Naive thymus-derived CD4-positive, alpha-beta T cell (primary cell): ENCODE measurements at regions of chr4 and their contacts with region 1.

Region 1: GRCh38 chr4:122309988-122310626 is 68.7 kb upstream of the ADAD1 start:
- DNase-seq: peak in 3 of 9 donors; percentile 2 to 8 (median 7)
- ATAC-seq: no peak
- H3K4me3 ChIP-seq: no peak overlapping the region
- H3K4me3 Mint-ChIP-seq: no peak overlapping the region
- H3K27ac ChIP-seq: no peak overlapping the region
- H3K27ac Mint-ChIP-seq: no peak overlapping the region
- H3K4me1 ChIP-seq: no peaks in the 10 kb centered on the region
- H3K4me1 Mint-ChIP-seq: peaks cover 0 to 4% (median 0%) of the 10 kb centered on the region in 7 donors
- H3K27me3 ChIP-seq: no peaks in the 10 kb centered on the region
- H3K27me3 Mint-ChIP-seq: no peaks in the 10 kb centered on the region

Region 2: DNA sequence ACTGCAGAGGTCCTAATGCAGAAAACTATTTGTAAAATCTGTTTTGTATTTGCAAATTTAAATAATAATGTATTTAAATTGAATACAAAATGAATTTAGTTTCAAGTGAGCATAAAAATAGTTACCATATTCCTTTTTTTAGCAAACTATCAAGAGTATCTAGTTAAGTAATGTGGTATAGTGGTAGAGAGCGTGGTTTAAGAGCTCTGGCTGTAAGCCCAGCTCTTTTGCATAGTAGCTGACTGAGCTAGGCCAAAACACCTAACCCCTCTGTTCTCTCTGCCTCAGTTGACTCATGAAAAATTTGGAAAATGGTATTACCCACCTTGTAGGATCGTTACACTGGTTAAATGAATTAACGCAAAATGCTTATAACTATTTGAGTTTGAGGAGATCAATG is 50.6 kb after region 1 on chr4:
- CTCF ChIA-PET with region 1: no interaction called
- POLR2A ChIA-PET with region 1: no interaction called
- intact Hi-C with region 1: no loop called
- DNase-seq: no peak
- ATAC-seq: no peak
- H3K4me3 ChIP-seq: no peak overlapping the region
- H3K4me3 Mint-ChIP-seq: no peak overlapping the region
- H3K27ac ChIP-seq: no peak overlapping the region
- H3K27ac Mint-ChIP-seq: no peak overlapping the region
- H3K4me1 ChIP-seq: no peaks in the 10 kb centered on the region
- H3K4me1 Mint-ChIP-seq: peaks cover 0 to 5% (median 0%) of the 10 kb centered on the region in 7 donors
- H3K27me3 ChIP-seq: no peaks in the 10 kb centered on the region
- H3K27me3 Mint-ChIP-seq: no peaks in the 10 kb centered on the region

Region 3: DNA sequence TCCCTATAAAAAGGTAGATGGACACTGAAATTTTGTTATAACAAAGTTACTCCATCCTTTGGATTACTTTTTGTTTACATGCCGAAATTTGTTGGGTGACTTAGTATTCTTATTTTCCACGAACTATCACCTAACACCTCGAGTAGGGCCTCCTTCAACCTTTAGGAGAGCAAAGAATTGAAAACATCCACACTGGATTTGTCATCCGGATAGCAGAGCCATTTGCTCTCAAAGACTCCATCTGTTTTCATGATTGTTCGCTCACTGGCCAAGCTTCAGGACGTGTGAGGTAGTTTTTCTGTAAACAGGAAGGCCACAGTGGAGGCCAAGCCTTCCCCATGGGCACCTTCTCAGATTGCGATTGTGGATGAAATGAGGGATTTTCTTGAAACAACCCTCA is 68.6 kb after region 1 on chr4 and contains the start of gene ADAD1:
- CTCF ChIA-PET with region 1: no interaction called
- POLR2A ChIA-PET with region 1: no interaction called
- intact Hi-C with region 1: no loop called
- DNase-seq: no peak
- ATAC-seq: no peak
- H3K4me3 ChIP-seq: no peak within 1 kb of the TSS
- H3K4me3 Mint-ChIP-seq: no peak within 1 kb of the TSS
- H3K27ac ChIP-seq: no peak within 1 kb of the TSS
- H3K27ac Mint-ChIP-seq: no peak within 1 kb of the TSS
- H3K4me1 ChIP-seq: no peaks in the 10 kb centered on the region
- H3K4me1 Mint-ChIP-seq: no peaks in the 10 kb centered on the region
- H3K27me3 ChIP-seq: no peaks in the 10 kb centered on the region
- H3K27me3 Mint-ChIP-seq: no peaks in the 10 kb centered on the region
- total RNA-seq, gene ADAD1: not detected

Region 4: DNA sequence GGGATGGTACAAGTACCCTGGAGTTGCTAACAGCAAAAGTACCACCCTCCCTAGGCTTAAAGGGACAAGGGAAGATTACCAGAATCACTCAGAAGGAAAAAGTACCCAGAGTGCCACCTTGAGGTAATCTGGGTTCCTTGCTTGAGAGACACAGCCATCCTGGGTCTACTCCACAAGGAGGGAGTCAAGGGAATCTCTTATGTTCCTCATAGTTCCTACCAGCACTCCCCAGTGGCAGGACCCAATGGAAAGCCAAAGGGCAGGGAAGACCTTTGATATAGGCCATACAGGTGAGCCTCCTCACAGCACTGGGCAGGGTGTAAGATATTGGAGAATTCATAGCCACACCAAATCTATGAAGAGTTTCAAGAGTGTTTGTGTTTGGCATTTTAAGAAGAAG is 140.7 kb after region 1 on chr4:
- CTCF ChIA-PET with region 1: interaction called, 3 read pairs
- POLR2A ChIA-PET with region 1: no interaction called
- intact Hi-C with region 1: loop called (anchors 5 kb)
- DNase-seq: peak in 2 of 9 donors; percentile 14 to 23
- ATAC-seq: peak; percentile 27
- H3K4me3 ChIP-seq: no peak overlapping the region
- H3K4me3 Mint-ChIP-seq: no peak overlapping the region
- H3K27ac ChIP-seq: no peak overlapping the region
- H3K27ac Mint-ChIP-seq: no peak overlapping the region
- H3K4me1 ChIP-seq: peaks cover 7 to 20% of the 10 kb centered on the region in 2 donors
- H3K4me1 Mint-ChIP-seq: peaks cover 8 to 37% (median 31%) of the 10 kb centered on the region in 7 donors
- H3K27me3 ChIP-seq: no peaks in the 10 kb centered on the region
- H3K27me3 Mint-ChIP-seq: peaks cover 0 to 6% (median 0%) of the 10 kb centered on the region in 5 donors

Region 5: GRCh38 chr4:122930862-122931261 is 620.8 kb after region 1 on chr4:
- CTCF ChIA-PET with region 1: no interaction called
- POLR2A ChIA-PET with region 1: no interaction called
- intact Hi-C with region 1: loop called (anchors 10 kb)
- DNase-seq: peak in 3 of 9 donors; percentile 6 to 17 (median 14)
- ATAC-seq: no peak
- H3K4me3 ChIP-seq: no peak overlapping the region
- H3K4me3 Mint-ChIP-seq: no peak overlapping the region
- H3K27ac ChIP-seq: no peak overlapping the region
- H3K27ac Mint-ChIP-seq: no peak overlapping the region
- H3K4me1 ChIP-seq: no peaks in the 10 kb centered on the region
- H3K4me1 Mint-ChIP-seq: peaks cover 0 to 36% (median 7%) of the 10 kb centered on the region in 7 donors
- H3K27me3 ChIP-seq: no peaks in the 10 kb centered on the region
- H3K27me3 Mint-ChIP-seq: no peaks in the 10 kb centered on the region

Region 6: GRCh38 chr4:124092541-124092984 is 1782.5 kb after region 1 on chr4:
- CTCF ChIA-PET with region 1: no interaction called
- POLR2A ChIA-PET with region 1: no interaction called
- intact Hi-C with region 1: no loop called
- DNase-seq: no peak
- ATAC-seq: no peak
- H3K4me3 ChIP-seq: no peak overlapping the region
- H3K4me3 Mint-ChIP-seq: no peak overlapping the region
- H3K27ac ChIP-seq: no peak overlapping the region
- H3K27ac Mint-ChIP-seq: no peak overlapping the region
- H3K4me1 ChIP-seq: no peaks in the 10 kb centered on the region
- H3K4me1 Mint-ChIP-seq: no peaks in the 10 kb centered on the region
- H3K27me3 ChIP-seq: no peaks in the 10 kb centered on the region
- H3K27me3 Mint-ChIP-seq: no peaks in the 10 kb centered on the region